ENCODE measurements at regions of chr1 and their contacts with region 1.

Region 1: DNA sequence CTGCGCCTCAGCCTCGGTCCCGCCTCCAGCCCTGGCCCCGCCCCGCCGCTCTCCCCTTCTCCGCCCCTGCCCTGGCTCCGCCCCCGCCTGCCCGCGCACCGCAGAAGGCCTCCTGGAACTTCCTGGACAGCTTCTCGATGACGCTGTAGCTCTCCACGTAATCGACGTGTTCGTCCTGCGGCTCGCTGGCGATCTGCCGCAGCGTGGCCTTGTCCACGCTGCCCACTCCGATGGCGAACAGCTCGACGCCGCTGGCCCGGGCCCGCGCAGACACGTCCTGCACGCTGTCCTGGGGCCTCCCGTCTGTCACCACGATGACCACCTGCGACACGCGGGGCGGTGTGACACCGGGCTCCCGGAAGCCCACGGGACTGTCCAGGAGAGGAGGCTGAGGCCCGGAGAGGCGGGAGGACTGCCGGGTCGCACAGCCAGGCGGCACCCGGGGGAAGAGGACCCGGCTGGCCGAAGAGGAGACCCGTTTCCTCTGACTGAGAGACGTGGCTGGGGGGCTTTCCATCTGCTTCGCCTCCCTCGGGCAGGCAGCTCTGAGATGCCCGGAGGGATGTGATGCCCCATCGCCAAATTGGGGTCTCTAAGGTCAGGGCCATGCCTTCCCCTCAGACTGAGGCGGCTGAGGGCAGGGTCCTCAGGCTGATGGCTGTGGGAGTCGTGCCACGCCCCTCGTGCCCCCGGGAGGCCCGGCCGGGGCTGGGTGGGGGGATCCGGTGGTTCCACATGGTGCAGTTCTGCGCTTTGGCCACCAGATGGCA is 4.6 kb downstream of the MATN1 start:
- DNase-seq: peak; percentile 98
- ATAC-seq: peak; percentile 64
- H3K4me3 ChIP-seq: peak overlapping the region; percentile 7 to 96 (median 92)
- H3K4me3 Mint-ChIP-seq: peak overlapping the region; percentile 88
- H3K27ac ChIP-seq: peak overlapping the region; percentile 99 to 100
- H3K27ac Mint-ChIP-seq: peak overlapping the region; percentile 94
- H3K4me1 ChIP-seq: peaks cover 18 to 54% of the 10 kb centered on the region in 2 donors
- H3K4me1 Mint-ChIP-seq: peaks cover 44% of the 10 kb centered on the region
- H3K27me3 ChIP-seq: no peaks in the 10 kb centered on the region
- H3K27me3 Mint-ChIP-seq: no peaks in the 10 kb centered on the region
- CTCF ChIP-seq: no peak

Region 2: GRCh38 chr1:30756545-30757195 is 37.8 kb after region 1 on chr1:
- CTCF ChIA-PET with region 1: interaction called, 769 read pairs
- POLR2A ChIA-PET with region 1: interaction called, 57 read pairs
- intact Hi-C with region 1: loop called (anchors 1 kb)
- DNase-seq: peak; percentile 87
- ATAC-seq: peak; percentile 19
- H3K4me3 ChIP-seq: peak overlapping the region; percentile 80 to 97 (median 95)
- H3K4me3 Mint-ChIP-seq: peak overlapping the region; percentile 92
- H3K27ac ChIP-seq: peak overlapping the region; percentile 98 to 100
- H3K27ac Mint-ChIP-seq: peak overlapping the region; percentile 92
- H3K4me1 ChIP-seq: peaks cover 62 to 87% of the 10 kb centered on the region in 2 donors
- H3K4me1 Mint-ChIP-seq: peaks cover 78% of the 10 kb centered on the region
- H3K27me3 ChIP-seq: no peaks in the 10 kb centered on the region
- H3K27me3 Mint-ChIP-seq: no peaks in the 10 kb centered on the region
- CTCF ChIP-seq: no peak

Region 3: DNA sequence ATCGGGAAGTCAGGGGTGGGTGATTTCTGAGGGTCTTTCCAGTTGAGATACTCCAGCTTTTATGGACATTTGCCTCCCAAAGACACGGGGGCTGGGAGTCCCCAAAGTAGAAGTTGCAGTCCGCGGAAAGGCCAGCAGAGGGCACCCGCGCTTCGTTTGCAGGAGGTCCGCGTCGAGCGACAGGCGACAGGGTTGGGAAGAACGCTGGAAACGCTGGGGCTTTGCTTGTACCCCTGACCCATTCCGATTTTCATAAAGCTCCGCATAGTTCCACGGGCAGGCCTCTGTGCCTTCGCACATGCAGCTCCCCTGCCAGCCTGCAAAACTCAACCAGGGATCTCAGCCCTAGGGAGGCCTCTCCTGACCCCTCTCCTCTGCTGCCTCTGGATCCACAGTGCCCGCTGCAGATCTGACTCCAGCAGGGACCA is 83.0 kb after region 1 on chr1:
- CTCF ChIA-PET with region 1: interaction called, 52 read pairs
- POLR2A ChIA-PET with region 1: no interaction called
- intact Hi-C with region 1: no loop called
- DNase-seq: peak; percentile 82
- ATAC-seq: peak; percentile 68
- H3K4me3 ChIP-seq: no peak overlapping the region
- H3K4me3 Mint-ChIP-seq: no peak overlapping the region
- H3K27ac ChIP-seq: no peak overlapping the region
- H3K27ac Mint-ChIP-seq: no peak overlapping the region
- H3K4me1 ChIP-seq: peaks cover 10 to 13% of the 10 kb centered on the region in 2 donors
- H3K4me1 Mint-ChIP-seq: peaks cover 14% of the 10 kb centered on the region
- H3K27me3 ChIP-seq: peaks cover 0 to 42% (median 10%) of the 10 kb centered on the region in 4 experiments
- H3K27me3 Mint-ChIP-seq: peaks cover 26% of the 10 kb centered on the region
- CTCF ChIP-seq: peak; percentile 97

Region 4: DNA sequence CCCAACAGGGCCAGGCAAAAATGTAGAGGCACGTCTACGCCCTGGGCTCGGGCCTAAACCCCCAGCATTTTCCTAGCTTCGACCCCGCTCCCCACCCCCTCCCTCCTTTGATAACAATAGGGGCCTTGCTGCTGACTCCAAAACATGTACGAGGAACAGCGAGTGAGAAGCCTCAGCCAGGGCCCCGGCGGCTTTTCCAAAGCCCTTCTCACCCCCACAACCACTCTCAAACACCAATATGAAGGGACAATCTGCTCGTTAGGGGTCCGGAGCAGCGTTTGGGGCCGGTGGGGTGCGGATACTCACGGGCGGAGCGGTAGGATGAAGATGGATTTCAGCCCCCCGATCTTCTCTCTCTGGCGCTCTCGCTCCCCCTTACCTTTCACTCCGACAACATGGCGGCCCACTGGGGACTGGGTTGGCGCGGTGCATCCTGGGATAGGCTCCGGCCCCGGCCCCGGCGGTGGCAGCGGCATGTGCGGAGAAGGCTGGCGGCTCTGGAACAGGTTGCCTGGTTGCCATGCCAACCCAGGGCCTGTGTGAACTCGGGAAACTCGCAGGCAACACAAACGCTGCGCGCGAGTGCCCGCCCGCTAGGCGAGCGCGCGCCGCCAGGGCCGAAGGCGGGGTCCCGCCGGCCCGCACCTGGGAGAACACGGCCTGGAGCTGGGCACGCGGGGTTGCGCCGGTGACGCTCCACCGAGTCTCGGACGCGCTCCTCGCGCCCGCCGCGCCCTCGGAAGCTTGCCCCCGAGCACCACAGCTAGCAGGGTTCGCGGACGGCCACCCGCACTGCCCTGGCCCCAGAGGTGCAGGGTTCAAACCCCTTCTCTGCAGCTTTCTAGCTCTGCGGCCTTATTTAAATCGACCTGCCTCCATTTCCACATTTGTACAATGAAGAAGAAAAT is 346.7 kb after region 1 on chr1 and contains the start of gene PUM1:
- CTCF ChIA-PET with region 1: no interaction called
- POLR2A ChIA-PET with region 1: no interaction called
- intact Hi-C with region 1: loop called (anchors 2 kb)
- DNase-seq: peak; percentile 98
- ATAC-seq: peak; percentile 93
- H3K4me3 ChIP-seq: peak within 1 kb of the TSS; percentile 72 to 93 (median 84)
- H3K4me3 Mint-ChIP-seq: peak within 1 kb of the TSS; percentile 100
- H3K27ac ChIP-seq: peak within 1 kb of the TSS; percentile 90 to 94
- H3K27ac Mint-ChIP-seq: peak within 1 kb of the TSS; percentile 99
- H3K4me1 ChIP-seq: peaks cover 25 to 33% of the 10 kb centered on the region in 2 donors
- H3K4me1 Mint-ChIP-seq: peaks cover 40% of the 10 kb centered on the region
- H3K27me3 ChIP-seq: no peaks in the 10 kb centered on the region
- H3K27me3 Mint-ChIP-seq: no peaks in the 10 kb centered on the region
- CTCF ChIP-seq: no peak
- total RNA-seq, gene PUM1: 177 and 179 TPM in 2 replicates

Region 5: GRCh38 chr1:31548907-31549808 is 830.3 kb after region 1 on chr1:
- CTCF ChIA-PET with region 1: no interaction called
- POLR2A ChIA-PET with region 1: no interaction called
- intact Hi-C with region 1: loop called (anchors 2 kb)
- DNase-seq: peak; percentile 89
- ATAC-seq: peak; percentile 98
- H3K4me3 ChIP-seq: no peak overlapping the region
- H3K4me3 Mint-ChIP-seq: peak overlapping the region; percentile 29
- H3K27ac ChIP-seq: no peak overlapping the region
- H3K27ac Mint-ChIP-seq: no peak overlapping the region
- H3K4me1 ChIP-seq: peaks cover 6 to 11% of the 10 kb centered on the region in 2 donors
- H3K4me1 Mint-ChIP-seq: peaks cover 10% of the 10 kb centered on the region
- H3K27me3 ChIP-seq: peaks cover 0 to 6% (median 2%) of the 10 kb centered on the region in 4 experiments
- H3K27me3 Mint-ChIP-seq: peaks cover 11% of the 10 kb centered on the region
- CTCF ChIP-seq: peak; percentile 94

Measured in B cell (primary cell).